ENCODE measurements at regions of chr3 and their contacts with region 1.

Region 1: DNA sequence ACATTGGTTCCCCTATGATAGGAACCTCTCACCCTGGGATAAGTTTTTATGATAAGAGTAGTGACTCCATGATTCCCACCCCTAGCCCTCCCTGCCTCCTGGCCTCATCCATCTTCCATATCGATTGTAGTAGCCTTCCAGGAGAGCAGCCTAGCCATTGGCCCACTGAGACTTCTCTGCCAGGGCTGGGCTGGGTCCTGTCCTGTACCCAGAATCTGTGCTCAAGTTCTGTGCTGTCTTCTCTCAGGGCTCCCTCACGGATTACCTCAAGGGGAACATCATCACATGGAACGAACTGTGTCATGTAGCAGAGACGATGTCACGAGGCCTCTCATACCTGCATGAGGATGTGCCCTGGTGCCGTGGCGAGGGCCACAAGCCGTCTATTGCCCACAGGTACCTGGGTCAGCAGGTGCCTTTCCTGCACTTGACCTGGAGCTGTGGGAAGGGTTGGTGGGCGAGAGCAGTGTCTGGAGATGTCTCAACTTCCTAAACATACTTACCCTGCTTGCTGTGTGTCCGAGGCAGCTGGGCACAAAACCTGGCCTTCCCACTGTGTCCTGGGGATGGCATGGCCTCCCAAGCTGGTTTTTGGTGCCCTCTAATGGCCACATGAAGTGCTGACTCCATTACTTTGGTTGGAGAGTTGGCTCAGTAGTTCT is 16.6 kb upstream of the EXOG start:
- DNase-seq: no peak
- ATAC-seq: peak; percentile 92
- H3K4me3 ChIP-seq: no peak overlapping the region
- H3K27ac ChIP-seq: no peak overlapping the region
- H3K4me1 ChIP-seq: no peaks in the 10 kb centered on the region
- H3K27me3 ChIP-seq: no peaks in the 10 kb centered on the region
- CTCF ChIP-seq: peak; percentile 83 to 88 (median 88)
- POLR2A ChIP-seq: no peak
- RAD21 ChIP-seq: peak; percentile 97

Region 2: DNA sequence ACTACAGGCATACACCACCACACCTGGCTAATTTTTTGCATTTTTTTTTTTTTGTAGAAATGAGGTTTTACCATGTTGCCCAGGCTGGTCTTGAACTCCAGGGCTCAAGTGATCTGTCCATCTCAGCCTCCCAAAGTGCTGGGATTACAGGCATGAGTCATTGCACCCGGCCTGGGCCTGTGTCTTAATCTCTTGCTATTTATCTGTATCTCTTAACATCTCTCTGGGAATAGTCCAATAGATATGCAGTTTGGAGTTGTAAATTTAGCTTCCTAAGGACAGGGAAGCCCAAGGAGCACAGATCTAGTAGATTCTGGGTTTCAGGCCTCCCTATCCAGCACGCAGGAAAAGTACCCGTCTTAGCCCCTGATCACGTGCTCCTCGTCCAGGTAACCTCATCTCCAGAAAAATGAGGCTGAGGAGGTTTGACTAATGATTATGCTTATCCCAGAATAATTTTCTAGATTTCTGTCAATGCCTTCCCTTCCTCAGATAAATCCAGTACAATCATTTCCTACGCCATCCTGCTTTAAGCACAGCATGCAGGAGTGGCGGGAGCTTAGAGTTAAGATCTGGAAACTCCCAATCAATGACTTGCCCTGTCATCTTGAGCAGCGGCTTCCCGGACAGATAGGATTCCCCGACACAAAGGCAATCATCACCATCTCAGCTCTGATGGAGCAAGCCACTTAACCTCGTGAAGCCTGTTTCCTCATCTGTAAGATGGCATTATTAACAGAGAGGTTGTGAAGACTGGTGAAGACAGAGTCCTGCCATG is 630.2 kb before region 1 on chr3:
- CTCF ChIA-PET with region 1: no interaction called
- POLR2A ChIA-PET with region 1: no interaction called
- RAD21 ChIA-PET with region 1: no interaction called
- intact Hi-C with region 1: no loop called
- DNase-seq: no peak
- ATAC-seq: no peak
- H3K4me3 ChIP-seq: no peak overlapping the region
- H3K27ac ChIP-seq: no peak overlapping the region
- H3K4me1 ChIP-seq: no peaks in the 10 kb centered on the region
- H3K27me3 ChIP-seq: no peaks in the 10 kb centered on the region
- CTCF ChIP-seq: no peak
- POLR2A ChIP-seq: no peak
- RAD21 ChIP-seq: no peak

Region 3: DNA sequence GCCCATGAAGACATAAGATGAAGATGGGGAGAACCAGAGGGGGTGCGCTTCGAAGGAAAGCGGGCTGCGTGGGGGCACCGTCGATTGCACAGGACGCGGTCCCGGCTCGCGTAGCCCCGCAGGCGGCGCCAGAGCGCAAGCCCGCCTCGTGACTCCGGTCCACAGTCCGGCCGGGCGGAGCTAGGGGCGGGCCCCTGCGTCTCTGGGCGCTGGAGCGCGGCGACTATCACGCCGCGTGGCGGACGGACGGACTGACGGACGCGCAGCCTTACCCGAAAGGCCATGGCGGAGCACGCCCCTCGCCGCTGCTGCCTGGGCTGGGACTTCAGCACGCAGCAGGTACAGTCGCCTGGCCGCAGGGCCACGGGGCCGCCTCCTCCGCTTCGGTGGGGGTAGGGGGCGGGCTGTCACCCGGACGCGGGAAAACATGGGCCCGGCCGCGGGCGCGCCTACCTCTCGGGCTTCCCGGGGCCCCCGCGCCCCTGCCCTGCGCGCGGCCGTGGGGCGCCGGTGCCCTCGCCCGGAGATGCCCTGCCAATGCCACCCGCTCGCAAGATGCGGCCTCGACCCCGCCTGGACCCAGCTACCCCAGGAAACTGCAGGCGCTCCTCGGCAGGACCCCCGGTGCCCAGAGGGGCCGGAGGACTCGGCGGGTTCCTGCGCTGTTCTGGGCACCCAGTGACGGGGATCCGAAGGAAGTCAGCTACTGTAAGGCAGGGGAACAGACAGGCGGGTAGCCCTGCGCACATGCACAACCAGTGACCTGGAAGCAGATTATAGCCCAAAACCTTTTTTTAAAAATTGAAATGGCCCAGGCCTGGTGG is 132.8 kb before region 1 on chr3 and contains the start of gene XYLB:
- CTCF ChIA-PET with region 1: interaction called, 10 read pairs
- POLR2A ChIA-PET with region 1: no interaction called
- RAD21 ChIA-PET with region 1: interaction called in 1 of 2 experiments, 3 read pairs
- intact Hi-C with region 1: loop called (anchors 2 kb)
- DNase-seq: peak; percentile 63
- ATAC-seq: peak; percentile 94
- H3K4me3 ChIP-seq: peak within 1 kb of the TSS; percentile 77 to 87
- H3K27ac ChIP-seq: peak within 1 kb of the TSS; percentile 64
- H3K4me1 ChIP-seq: peaks cover 0 to 34% of the 10 kb centered on the region in 2 experiments; a peak in 2 of 4 replicates
- H3K27me3 ChIP-seq: no peaks in the 10 kb centered on the region
- CTCF ChIP-seq: peak; percentile 68 to 81 (median 76)
- POLR2A ChIP-seq: peak; percentile 29
- RAD21 ChIP-seq: peak; percentile 74
- total RNA-seq, gene XYLB: 14.0 TPM

Region 4: DNA sequence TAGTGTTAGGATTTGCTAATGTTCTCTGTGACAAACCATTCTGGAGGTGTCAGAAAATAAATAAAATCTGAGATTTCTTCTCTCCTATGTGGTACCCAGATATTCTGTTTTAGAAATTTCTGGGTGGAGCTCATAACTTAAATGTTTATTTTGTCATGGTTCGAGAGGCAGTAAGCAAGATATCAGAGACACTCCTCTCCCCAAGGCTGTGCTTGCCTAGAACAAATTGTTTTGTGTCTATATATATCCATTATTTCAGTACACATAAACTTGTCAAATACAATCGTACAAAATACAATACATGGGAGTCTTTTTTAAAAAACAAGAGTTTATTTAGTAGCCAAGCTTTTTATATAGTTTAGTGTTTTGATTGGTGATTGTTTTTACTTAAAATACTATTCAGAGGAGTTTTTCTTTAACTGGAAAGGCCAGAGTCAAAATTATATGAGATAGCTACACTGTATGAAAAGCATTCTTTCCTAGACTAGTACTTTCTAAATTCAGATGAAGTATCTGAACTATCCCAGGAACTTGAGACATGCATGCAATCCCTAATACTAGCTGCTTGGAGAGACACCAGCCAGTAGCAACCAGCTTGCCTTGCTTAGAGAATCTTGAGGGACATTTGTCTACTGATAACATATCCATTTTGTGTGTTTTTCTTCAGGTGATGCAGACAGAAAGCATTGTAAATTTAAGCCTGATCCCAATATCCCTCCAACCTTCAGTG is 21.3 kb after region 1 on chr3:
- CTCF ChIA-PET with region 1: no interaction called
- POLR2A ChIA-PET with region 1: no interaction called
- RAD21 ChIA-PET with region 1: no interaction called
- intact Hi-C with region 1: no loop called
- DNase-seq: no peak
- ATAC-seq: no peak
- H3K4me3 ChIP-seq: no peak overlapping the region
- H3K27ac ChIP-seq: no peak overlapping the region
- H3K4me1 ChIP-seq: peaks cover 4 to 7% of the 10 kb centered on the region in 2 experiments; a peak in 3 of 4 replicates
- H3K27me3 ChIP-seq: no peaks in the 10 kb centered on the region
- CTCF ChIP-seq: no peak
- POLR2A ChIP-seq: no peak
- RAD21 ChIP-seq: no peak

Measured in HCT116 (cell line).